Prostate gland (tissue), 2 donors: ENCODE measurements at regions of chr6 and their contacts with region 1.

Region 1: GRCh38 chr6:133241086-133241900 is at the start of gene EYA4:
- DNase-seq: no peak
- H3K4me3 ChIP-seq: peak within 1 kb of the TSS; percentile 39 to 40
- H3K27ac ChIP-seq: peak within 1 kb of the TSS; percentile 79 to 82
- H3K4me1 ChIP-seq: no peaks in the 10 kb centered on the region
- H3K27me3 ChIP-seq: peaks cover 8% of the 10 kb centered on the region
- CTCF ChIP-seq: no peak
- POLR2A ChIP-seq: no peak
- total RNA-seq, gene EYA4: 4.1 to 7.3 TPM

Region 2: DNA sequence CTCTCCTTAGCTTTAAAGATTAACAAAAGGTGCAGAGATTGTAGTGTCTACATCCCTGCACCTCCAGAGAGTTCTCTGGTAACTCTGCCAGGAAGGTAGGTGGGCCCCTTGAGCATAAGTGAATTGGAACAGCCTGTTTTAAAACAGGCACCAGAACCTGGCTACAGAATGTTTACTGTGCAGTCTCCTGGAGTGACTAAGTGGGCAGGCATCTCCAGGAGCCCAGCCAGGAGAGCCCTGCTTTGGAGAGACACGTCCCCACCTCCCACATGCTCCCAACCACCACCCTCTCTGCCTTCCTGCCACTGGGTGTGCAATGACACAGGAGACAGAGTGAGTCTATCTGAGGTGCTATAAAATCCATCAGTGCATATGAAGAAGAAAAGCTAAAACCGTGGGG is 110.4 kb before region 1 on chr6:
- intact Hi-C with region 1: loop called (anchors 5 kb)
- DNase-seq: peak; percentile 69
- H3K4me3 ChIP-seq: no peak overlapping the region
- H3K27ac ChIP-seq: peak overlapping the region in 1 of 2 donors; percentile 55
- H3K4me1 ChIP-seq: no peaks in the 10 kb centered on the region
- H3K27me3 ChIP-seq: no peaks in the 10 kb centered on the region
- CTCF ChIP-seq: peak in 1 of 4 experiments; percentile 22
- POLR2A ChIP-seq: no peak

Region 3: GRCh38 chr6:133184798-133185372 is 56.4 kb before region 1 on chr6:
- intact Hi-C with region 1: loop called (anchors 5 kb)
- DNase-seq: no peak
- H3K4me3 ChIP-seq: no peak overlapping the region
- H3K27ac ChIP-seq: no peak overlapping the region
- H3K4me1 ChIP-seq: no peaks in the 10 kb centered on the region
- H3K27me3 ChIP-seq: no peaks in the 10 kb centered on the region
- CTCF ChIP-seq: peak in 3 of 4 experiments; percentile 29 to 35 (median 34)
- POLR2A ChIP-seq: no peak

Region 4: GRCh38 chr6:133202610-133203343 is 38.5 kb before region 1 on chr6:
- intact Hi-C with region 1: no loop called
- DNase-seq: no peak
- H3K4me3 ChIP-seq: no peak overlapping the region
- H3K27ac ChIP-seq: no peak overlapping the region
- H3K4me1 ChIP-seq: no peaks in the 10 kb centered on the region
- H3K27me3 ChIP-seq: no peaks in the 10 kb centered on the region
- CTCF ChIP-seq: no peak
- POLR2A ChIP-seq: no peak

Region 5: GRCh38 chr6:133309579-133309978 is 68.3 kb after region 1 on chr6:
- intact Hi-C with region 1: loop called (anchors 10 kb)
- DNase-seq: no peak
- H3K4me3 ChIP-seq: no peak overlapping the region
- H3K27ac ChIP-seq: no peak overlapping the region
- H3K4me1 ChIP-seq: no peaks in the 10 kb centered on the region
- H3K27me3 ChIP-seq: no peaks in the 10 kb centered on the region
- CTCF ChIP-seq: no peak
- POLR2A ChIP-seq: no peak

Region 6: GRCh38 chr6:133502441-133503259 is 261.4 kb after region 1 on chr6:
- intact Hi-C with region 1: loop called (anchors 5 kb)
- DNase-seq: no peak
- H3K4me3 ChIP-seq: no peak overlapping the region
- H3K27ac ChIP-seq: no peak overlapping the region
- H3K4me1 ChIP-seq: peaks cover 5% of the 10 kb centered on the region
- H3K27me3 ChIP-seq: no peaks in the 10 kb centered on the region
- CTCF ChIP-seq: no peak
- POLR2A ChIP-seq: no peak

Region 7: GRCh38 chr6:133553652-133554051 is 312.4 kb after region 1 on chr6:
- intact Hi-C with region 1: loop called (anchors 5 kb)
- DNase-seq: peak; percentile 19
- H3K4me3 ChIP-seq: no peak overlapping the region
- H3K27ac ChIP-seq: no peak overlapping the region
- H3K4me1 ChIP-seq: no peaks in the 10 kb centered on the region
- H3K27me3 ChIP-seq: no peaks in the 10 kb centered on the region
- CTCF ChIP-seq: peak in 3 of 4 experiments; percentile 55 to 59 (median 55)
- POLR2A ChIP-seq: no peak

Region 8: DNA sequence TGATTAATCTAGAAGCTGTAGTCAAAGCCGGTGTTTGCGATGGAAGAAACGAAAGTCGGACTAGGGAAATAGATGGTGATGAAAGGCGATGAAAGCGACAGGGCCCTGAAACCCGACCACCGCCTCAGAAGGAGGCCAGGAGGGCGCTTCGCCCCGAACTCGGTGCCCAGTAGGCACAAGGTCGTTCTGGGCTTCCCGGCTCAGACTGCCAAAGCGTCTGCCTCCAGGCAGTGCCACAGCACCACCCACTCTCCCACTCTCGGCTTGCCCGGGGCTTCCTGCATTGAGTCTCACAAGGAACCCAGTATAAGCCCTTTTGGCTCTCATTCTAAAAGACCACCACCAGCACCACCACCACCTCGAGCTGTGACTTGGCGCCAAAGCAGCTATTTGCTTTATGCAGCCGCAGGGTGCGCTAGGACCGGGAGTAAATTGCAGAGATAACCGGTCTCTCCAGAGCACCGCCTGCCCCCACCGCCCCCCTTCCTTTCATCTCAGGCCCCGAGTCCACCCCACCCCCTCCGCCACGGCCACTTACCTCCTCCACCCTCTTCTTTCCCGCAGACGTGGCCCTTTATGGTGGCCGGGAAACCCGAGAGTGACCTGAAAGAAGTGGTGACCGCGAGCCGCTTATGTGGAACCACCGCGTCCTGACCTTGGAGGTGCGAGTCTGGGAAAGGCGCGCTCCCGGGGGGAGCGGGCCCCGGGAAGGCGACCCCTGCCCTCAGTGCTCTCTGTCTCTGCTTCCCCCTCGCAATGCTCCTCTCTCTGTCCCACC is 650.0 kb after region 1 on chr6:
- intact Hi-C with region 1: loop called (anchors 10 kb)
- DNase-seq: no peak
- H3K4me3 ChIP-seq: peak overlapping the region; percentile 27 to 37
- H3K27ac ChIP-seq: peak overlapping the region; percentile 76 to 83
- H3K4me1 ChIP-seq: no peaks in the 10 kb centered on the region
- H3K27me3 ChIP-seq: peaks cover 22% of the 10 kb centered on the region
- CTCF ChIP-seq: no peak
- POLR2A ChIP-seq: no peak